ENCODE measurements at regions of chr17 and their contacts with region 1.

Region 1: GRCh38 chr17:9924735-9925191 is 19.7 kb upstream of the RCVRN start:
- DNase-seq: peak; percentile 61
- H3K4me3 ChIP-seq: peak overlapping the region in 1 of 2 experiments; percentile 31; a peak in 1 of 4 replicates
- H3K27ac ChIP-seq: no peak overlapping the region
- H3K4me1 ChIP-seq: no peaks in the 10 kb centered on the region
- H3K27me3 ChIP-seq: peaks cover 16% of the 10 kb centered on the region; the same call in 1 of the 2 replicates
- CTCF ChIP-seq: peak; percentile 82
- EP300 ChIP-seq: no peak
- RAD21 ChIP-seq: peak; percentile 87

Region 2: GRCh38 chr17:9860851-9861250 is 63.9 kb before region 1 on chr17:
- CTCF ChIA-PET with region 1: no interaction called
- POLR2A ChIA-PET with region 1: no interaction called
- DNase-seq: no peak
- H3K4me3 ChIP-seq: no peak overlapping the region
- H3K27ac ChIP-seq: no peak overlapping the region
- H3K4me1 ChIP-seq: no peaks in the 10 kb centered on the region
- H3K27me3 ChIP-seq: no peaks in the 10 kb centered on the region
- CTCF ChIP-seq: no peak
- EP300 ChIP-seq: no peak
- RAD21 ChIP-seq: no peak

Region 3: GRCh38 chr17:9937241-9937761 is 12.5 kb after region 1 on chr17:
- CTCF ChIA-PET with region 1: interaction called, 34 read pairs
- POLR2A ChIA-PET with region 1: no interaction called
- DNase-seq: no peak
- H3K4me3 ChIP-seq: no peak overlapping the region
- H3K27ac ChIP-seq: no peak overlapping the region
- H3K4me1 ChIP-seq: no peaks in the 10 kb centered on the region
- H3K27me3 ChIP-seq: no peaks in the 10 kb centered on the region
- CTCF ChIP-seq: no peak
- EP300 ChIP-seq: no peak
- RAD21 ChIP-seq: no peak

Region 4: DNA sequence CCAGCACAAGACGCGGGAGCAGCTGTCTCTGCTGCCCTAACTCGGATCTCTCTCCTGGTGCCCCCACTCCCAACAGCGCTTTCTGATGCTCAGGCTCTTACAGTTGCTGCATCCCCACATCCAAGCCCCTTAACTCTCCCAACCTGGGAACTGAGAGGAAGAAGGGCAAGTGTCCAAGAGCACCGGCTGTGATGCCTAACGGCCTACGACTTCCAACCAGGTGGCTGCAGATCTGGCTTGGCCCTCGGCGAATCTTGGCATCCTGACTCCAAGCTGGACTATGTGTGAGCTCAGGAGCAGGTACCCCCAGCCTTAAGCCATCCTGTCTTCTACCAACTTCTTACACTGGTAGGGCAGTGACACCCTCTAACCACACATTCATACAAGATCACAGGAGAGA is 18.6 kb after region 1 on chr17:
- CTCF ChIA-PET with region 1: interaction called, 17 read pairs
- POLR2A ChIA-PET with region 1: no interaction called
- DNase-seq: no peak
- H3K4me3 ChIP-seq: no peak overlapping the region
- H3K27ac ChIP-seq: no peak overlapping the region
- H3K4me1 ChIP-seq: no peaks in the 10 kb centered on the region
- H3K27me3 ChIP-seq: peaks cover 4% of the 10 kb centered on the region; the same call in 1 of the 2 replicates
- CTCF ChIP-seq: no peak
- EP300 ChIP-seq: no peak
- RAD21 ChIP-seq: no peak

Region 5: DNA sequence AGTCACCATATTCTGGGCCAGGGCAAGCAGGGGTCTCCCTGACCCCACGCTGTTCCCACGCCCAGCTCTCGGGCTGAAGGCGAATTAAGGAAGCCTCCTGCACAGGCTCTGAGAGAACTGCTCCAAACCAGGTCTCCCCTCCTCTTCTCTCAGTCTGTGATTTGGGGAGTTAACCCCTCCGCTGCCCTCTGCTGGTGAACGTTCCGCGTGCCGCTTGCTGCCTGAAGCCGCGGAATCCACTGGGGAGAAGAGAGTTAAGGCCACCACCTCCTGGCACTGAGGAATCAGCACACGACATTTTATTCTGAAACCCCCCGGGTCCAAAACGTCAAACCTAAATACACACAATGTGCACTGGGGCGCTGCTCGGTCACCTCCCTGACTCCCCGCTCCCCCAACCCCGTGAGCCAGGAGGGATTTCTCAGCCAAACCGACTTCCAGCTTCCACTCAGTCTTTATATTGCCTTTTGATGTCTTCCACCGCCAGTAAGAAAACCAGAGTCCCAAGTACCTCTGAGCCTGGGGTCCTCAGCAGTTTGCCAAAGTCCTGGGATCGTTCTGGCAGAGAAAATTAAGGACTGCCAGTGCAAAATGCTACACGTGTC is 34.7 kb after region 1 on chr17:
- CTCF ChIA-PET with region 1: interaction called, 16 read pairs
- POLR2A ChIA-PET with region 1: no interaction called
- DNase-seq: peak; percentile 71
- H3K4me3 ChIP-seq: no peak overlapping the region; a peak in 1 of 4 replicates
- H3K27ac ChIP-seq: no peak overlapping the region
- H3K4me1 ChIP-seq: no peaks in the 10 kb centered on the region
- H3K27me3 ChIP-seq: peaks cover 8% of the 10 kb centered on the region; the same call in 1 of the 2 replicates
- CTCF ChIP-seq: peak; percentile 54
- EP300 ChIP-seq: no peak
- RAD21 ChIP-seq: peak; percentile 38

Region 6: GRCh38 chr17:10226930-10227685 is 302.3 kb after region 1 on chr17:
- CTCF ChIA-PET with region 1: interaction called, 12 read pairs
- POLR2A ChIA-PET with region 1: no interaction called
- DNase-seq: peak; percentile 65
- H3K4me3 ChIP-seq: no peak overlapping the region
- H3K27ac ChIP-seq: no peak overlapping the region
- H3K4me1 ChIP-seq: no peaks in the 10 kb centered on the region
- H3K27me3 ChIP-seq: peaks cover 5% of the 10 kb centered on the region; the same call in 1 of the 2 replicates
- CTCF ChIP-seq: peak; percentile 74
- EP300 ChIP-seq: no peak
- RAD21 ChIP-seq: peak; percentile 61